ENCODE measurements at regions of chr5 and their contacts with region 1.

Region 1: DNA sequence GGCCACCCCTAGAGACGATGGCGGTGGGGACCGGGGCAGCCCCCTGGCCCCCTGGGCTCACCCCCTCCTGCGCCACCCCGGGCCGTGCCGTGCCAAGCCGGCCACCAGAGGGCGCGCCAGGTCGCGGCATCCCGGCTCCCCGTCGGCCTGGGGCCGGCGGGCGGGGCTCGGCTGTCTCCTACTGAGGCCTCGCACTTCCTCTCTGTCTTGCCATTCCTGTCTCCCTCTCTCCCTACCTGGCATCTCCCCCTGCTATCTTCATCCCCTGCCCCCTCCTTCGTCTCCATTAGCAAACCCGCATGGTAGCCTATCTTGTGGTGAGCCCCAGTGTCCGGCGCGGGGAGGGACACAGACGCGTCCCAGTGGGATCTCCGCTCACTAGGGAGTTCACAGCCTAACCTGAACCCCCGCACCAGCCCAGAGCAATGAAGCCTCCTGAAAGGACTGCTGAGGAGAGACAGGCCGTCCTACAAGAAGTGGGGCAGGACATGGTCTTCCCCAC is 29.8 kb upstream of the FABP6 start:
- DNase-seq: peak in 1 of 2 experiments; percentile 84
- H3K4me3 ChIP-seq: peak overlapping the region; percentile 35; the same call in 1 of the 2 replicates
- H3K27ac ChIP-seq: no peak overlapping the region
- H3K4me1 ChIP-seq: no peaks in the 10 kb centered on the region
- H3K27me3 ChIP-seq: no peaks in the 10 kb centered on the region
- CTCF ChIP-seq: peak; percentile 85

Region 2: GRCh38 chr5:160008877-160009590 is 190.4 kb before region 1 on chr5 and contains the start of gene TTC1:
- CTCF ChIA-PET with region 1: no interaction called
- POLR2A ChIA-PET with region 1: no interaction called
- intact Hi-C with region 1: no loop called
- DNase-seq: peak; percentile 90 to 97
- H3K4me3 ChIP-seq: peak within 1 kb of the TSS; percentile 99
- H3K27ac ChIP-seq: peak within 1 kb of the TSS; percentile 83
- H3K4me1 ChIP-seq: peaks cover 21% of the 10 kb centered on the region
- H3K27me3 ChIP-seq: no peaks in the 10 kb centered on the region
- CTCF ChIP-seq: no peak
- total RNA-seq, gene TTC1: 54.8 and 68.5 TPM in 2 replicates

Region 3: GRCh38 chr5:160021831-160022446 is 177.5 kb before region 1 on chr5:
- CTCF ChIA-PET with region 1: interaction called, 3 read pairs
- POLR2A ChIA-PET with region 1: no interaction called
- intact Hi-C with region 1: loop called (anchors 2 kb)
- DNase-seq: peak; percentile 40 to 56
- H3K4me3 ChIP-seq: no peak overlapping the region
- H3K27ac ChIP-seq: no peak overlapping the region
- H3K4me1 ChIP-seq: no peaks in the 10 kb centered on the region
- H3K27me3 ChIP-seq: no peaks in the 10 kb centered on the region
- CTCF ChIP-seq: peak; percentile 90

Region 4: GRCh38 chr5:160082614-160083500 is 116.6 kb before region 1 on chr5:
- CTCF ChIA-PET with region 1: no interaction called
- POLR2A ChIA-PET with region 1: no interaction called
- intact Hi-C with region 1: loop called (anchors 2 kb)
- DNase-seq: peak; percentile 22 to 49
- H3K4me3 ChIP-seq: no peak overlapping the region
- H3K27ac ChIP-seq: no peak overlapping the region
- H3K4me1 ChIP-seq: peaks cover 7% of the 10 kb centered on the region
- H3K27me3 ChIP-seq: no peaks in the 10 kb centered on the region
- CTCF ChIP-seq: no peak

Region 5: GRCh38 chr5:160390787-160391696 is 191.6 kb after region 1 on chr5:
- CTCF ChIA-PET with region 1: interaction called, 3 read pairs
- POLR2A ChIA-PET with region 1: no interaction called
- intact Hi-C with region 1: loop called (anchors 1 kb)
- DNase-seq: no peak
- H3K4me3 ChIP-seq: no peak overlapping the region
- H3K27ac ChIP-seq: no peak overlapping the region
- H3K4me1 ChIP-seq: no peaks in the 10 kb centered on the region
- H3K27me3 ChIP-seq: no peaks in the 10 kb centered on the region
- CTCF ChIP-seq: peak; percentile 74